ENCODE measurements at regions of chr1 and their contacts with region 1.

Region 1: DNA sequence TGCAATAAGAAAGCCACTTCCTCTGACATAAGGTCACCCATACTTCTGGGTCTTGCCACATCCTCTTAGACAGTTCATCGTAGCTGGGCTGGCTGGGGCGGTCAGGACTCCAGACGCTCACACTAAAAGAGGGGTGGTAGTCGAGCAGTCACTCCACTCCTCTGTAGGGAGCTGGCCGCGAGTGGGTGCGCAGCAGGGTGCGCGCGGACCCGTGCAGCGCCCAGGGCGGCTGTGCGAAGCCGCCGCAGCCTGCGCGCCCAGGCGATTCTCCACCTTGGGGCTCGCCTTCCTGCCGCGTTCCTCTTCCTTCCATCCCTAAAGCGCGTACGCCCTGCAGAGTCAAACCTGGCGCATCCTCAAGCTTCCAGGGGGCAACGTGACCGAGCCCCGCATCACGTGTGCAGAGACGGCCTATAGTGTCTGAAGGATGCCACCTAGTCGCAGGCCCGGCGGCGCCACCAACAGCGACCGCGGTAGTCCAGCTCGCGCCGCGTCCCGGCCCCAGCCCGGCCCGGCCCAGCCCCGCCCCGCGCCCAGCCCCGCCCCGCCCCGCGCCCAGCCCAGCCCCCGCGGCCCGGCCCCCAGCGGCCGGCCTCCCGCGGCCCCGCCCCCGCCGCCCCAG is 360 bp upstream of the PRDX6 start:
- DNase-seq: peak; percentile 51 to 91 (median 73)
- ATAC-seq: peak; percentile 76
- H3K4me3 ChIP-seq: peak overlapping the region; percentile 71 to 83
- H3K4me3 Mint-ChIP-seq: peak overlapping the region; percentile 93
- H3K27ac ChIP-seq: peak overlapping the region; percentile 70 to 91
- H3K27ac Mint-ChIP-seq: peak overlapping the region; percentile 95
- H3K4me1 ChIP-seq: peaks cover 54% of the 10 kb centered on the region
- H3K4me1 Mint-ChIP-seq: peaks cover 75% of the 10 kb centered on the region
- H3K27me3 ChIP-seq: no peaks in the 10 kb centered on the region
- H3K27me3 Mint-ChIP-seq: no peaks in the 10 kb centered on the region
- CTCF ChIP-seq: no peak

Region 2: DNA sequence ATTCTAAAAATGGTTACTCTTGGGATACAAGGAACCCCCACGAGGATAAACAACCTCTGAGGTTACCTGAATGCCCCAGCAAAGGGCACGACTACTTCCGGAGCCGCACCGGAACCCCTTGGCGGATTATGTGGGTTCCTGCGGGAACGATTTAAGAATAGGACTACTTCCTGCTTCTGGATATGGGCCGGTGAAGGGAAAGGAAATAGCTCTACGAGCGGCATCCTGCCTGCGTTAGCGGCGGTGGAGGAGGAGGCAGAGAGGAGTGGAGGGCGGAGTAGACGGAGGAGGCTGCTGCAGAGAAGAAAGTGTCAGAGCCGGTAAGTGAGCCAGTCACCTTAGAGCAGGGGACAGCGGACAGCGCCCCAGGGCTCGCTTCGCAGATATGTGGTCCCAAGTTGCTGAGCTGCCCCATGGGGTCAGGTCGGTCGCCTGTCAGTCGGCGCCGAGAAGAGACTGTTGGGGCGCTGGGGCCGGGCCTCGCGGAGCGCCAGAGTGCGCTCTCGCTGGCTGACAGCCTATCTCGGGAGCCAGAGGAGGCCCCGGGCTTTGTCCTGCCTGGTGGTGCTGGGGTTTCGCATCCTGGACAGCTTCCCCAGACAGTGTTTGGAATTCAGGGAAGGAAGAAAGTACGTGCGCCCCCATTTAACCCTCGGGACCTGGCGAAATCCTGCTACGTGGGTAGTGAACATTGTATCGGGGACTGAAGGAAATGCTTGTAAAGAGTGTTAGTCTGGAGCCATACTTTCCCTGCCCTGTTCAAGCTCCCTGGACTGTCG is 238.2 kb after region 1 on chr1 and contains the start of gene KLHL20:
- CTCF ChIA-PET with region 1: interaction called, 3 read pairs
- POLR2A ChIA-PET with region 1: interaction called, 37 read pairs
- intact Hi-C with region 1: loop called (anchors 1 kb)
- DNase-seq: peak; percentile 72 to 94 (median 83)
- ATAC-seq: peak; percentile 98
- H3K4me3 ChIP-seq: peak within 1 kb of the TSS; percentile 80 to 86
- H3K4me3 Mint-ChIP-seq: peak within 1 kb of the TSS; percentile 96
- H3K27ac ChIP-seq: peak within 1 kb of the TSS; percentile 76 to 87
- H3K27ac Mint-ChIP-seq: peak within 1 kb of the TSS; percentile 97
- H3K4me1 ChIP-seq: peaks cover 24% of the 10 kb centered on the region
- H3K4me1 Mint-ChIP-seq: peaks cover 38% of the 10 kb centered on the region
- H3K27me3 ChIP-seq: peaks cover 0 to 2% of the 10 kb centered on the region in 2 experiments
- H3K27me3 Mint-ChIP-seq: peaks cover 7% of the 10 kb centered on the region
- CTCF ChIP-seq: no peak
- total RNA-seq, gene KLHL20: 27.9 to 29.0 TPM

Region 3: GRCh38 chr1:173798078-173798477 is 321.3 kb after region 1 on chr1:
- CTCF ChIA-PET with region 1: no interaction called
- POLR2A ChIA-PET with region 1: no interaction called
- intact Hi-C with region 1: no loop called
- DNase-seq: no peak
- ATAC-seq: no peak
- H3K4me3 ChIP-seq: no peak overlapping the region
- H3K4me3 Mint-ChIP-seq: no peak overlapping the region
- H3K27ac ChIP-seq: no peak overlapping the region
- H3K27ac Mint-ChIP-seq: no peak overlapping the region
- H3K4me1 ChIP-seq: no peaks in the 10 kb centered on the region
- H3K4me1 Mint-ChIP-seq: no peaks in the 10 kb centered on the region
- H3K27me3 ChIP-seq: no peaks in the 10 kb centered on the region
- H3K27me3 Mint-ChIP-seq: no peaks in the 10 kb centered on the region
- CTCF ChIP-seq: no peak

Region 4: GRCh38 chr1:173867753-173868265 is 391.0 kb after region 1 on chr1 and contains the start of gene GAS5:
- CTCF ChIA-PET with region 1: no interaction called
- POLR2A ChIA-PET with region 1: interaction called, 19 read pairs
- intact Hi-C with region 1: loop called (anchors 1 to 2 kb)
- DNase-seq: peak; percentile 97 to 99 (median 98)
- ATAC-seq: peak; percentile 78
- H3K4me3 ChIP-seq: peak within 1 kb of the TSS; percentile 74 to 93
- H3K4me3 Mint-ChIP-seq: peak within 1 kb of the TSS; percentile 95
- H3K27ac ChIP-seq: peak within 1 kb of the TSS; percentile 75 to 93
- H3K27ac Mint-ChIP-seq: peak within 1 kb of the TSS; percentile 96
- H3K4me1 ChIP-seq: peaks cover 61% of the 10 kb centered on the region
- H3K4me1 Mint-ChIP-seq: peaks cover 70% of the 10 kb centered on the region
- H3K27me3 ChIP-seq: no peaks in the 10 kb centered on the region
- H3K27me3 Mint-ChIP-seq: no peaks in the 10 kb centered on the region
- CTCF ChIP-seq: no peak
- total RNA-seq, gene GAS5: 774 to 800 TPM

Region 5: DNA sequence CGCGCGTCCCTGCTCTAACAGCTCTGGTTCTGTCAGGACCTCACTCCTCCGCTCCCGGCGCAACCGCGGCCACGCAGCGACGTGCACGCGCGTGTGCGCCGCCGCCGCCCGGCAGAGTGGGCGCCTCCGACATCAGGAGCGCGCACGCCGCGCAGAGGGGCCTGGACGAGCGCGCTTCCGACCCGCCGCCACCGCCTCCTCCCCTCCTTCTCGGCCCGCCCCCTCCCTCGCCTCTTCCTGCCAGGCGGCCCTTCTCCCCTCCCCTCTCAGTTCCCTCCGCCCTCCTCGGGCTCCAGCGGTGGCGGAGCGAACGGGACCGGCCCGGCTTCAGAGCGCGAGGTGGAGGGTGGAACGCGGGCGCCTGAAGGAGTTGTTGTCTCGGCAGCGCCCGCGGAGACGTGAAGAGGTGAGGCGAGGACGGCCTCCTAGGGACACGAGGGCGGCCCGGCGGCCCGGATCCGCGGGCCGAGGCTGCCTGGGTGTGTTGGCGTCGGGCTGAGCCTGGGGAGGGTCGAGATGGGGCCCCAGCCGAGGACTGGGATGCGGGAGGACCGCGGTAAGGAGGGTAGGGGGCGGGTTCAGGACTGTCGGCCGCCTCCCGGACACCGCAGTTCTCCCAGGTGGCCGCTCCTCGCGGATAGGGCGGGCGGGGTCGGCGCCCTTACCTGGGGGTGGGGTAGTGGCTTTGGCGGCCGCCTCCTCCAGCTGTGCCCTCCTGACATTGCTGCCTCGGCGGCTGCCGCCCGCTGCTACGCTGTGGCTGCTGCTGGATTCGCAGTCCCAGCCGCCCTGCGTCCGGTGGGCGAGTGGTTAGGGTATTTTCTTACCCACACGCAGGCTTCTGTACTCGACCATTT is 682.7 kb after region 1 on chr1 and contains the start of gene RABGAP1L:
- CTCF ChIA-PET with region 1: no interaction called
- POLR2A ChIA-PET with region 1: no interaction called
- intact Hi-C with region 1: loop called (anchors 2 to 5 kb)
- DNase-seq: peak; percentile 90 to 98 (median 93)
- ATAC-seq: peak; percentile 90
- H3K4me3 ChIP-seq: peak within 1 kb of the TSS; percentile 73 to 74
- H3K4me3 Mint-ChIP-seq: peak within 1 kb of the TSS; percentile 91
- H3K27ac ChIP-seq: peak within 1 kb of the TSS; percentile 73 to 93
- H3K27ac Mint-ChIP-seq: peak within 1 kb of the TSS; percentile 96
- H3K4me1 ChIP-seq: peaks cover 16% of the 10 kb centered on the region
- H3K4me1 Mint-ChIP-seq: peaks cover 53% of the 10 kb centered on the region
- H3K27me3 ChIP-seq: no peaks in the 10 kb centered on the region
- H3K27me3 Mint-ChIP-seq: no peaks in the 10 kb centered on the region
- CTCF ChIP-seq: no peak
- total RNA-seq, gene RABGAP1L: 60.7 to 65.1 TPM

Measured in CD8-positive, alpha-beta T cell (primary cell).